H1 (cell line): ENCODE measurements at regions of chr3 and their contacts with region 1.

Region 1: DNA sequence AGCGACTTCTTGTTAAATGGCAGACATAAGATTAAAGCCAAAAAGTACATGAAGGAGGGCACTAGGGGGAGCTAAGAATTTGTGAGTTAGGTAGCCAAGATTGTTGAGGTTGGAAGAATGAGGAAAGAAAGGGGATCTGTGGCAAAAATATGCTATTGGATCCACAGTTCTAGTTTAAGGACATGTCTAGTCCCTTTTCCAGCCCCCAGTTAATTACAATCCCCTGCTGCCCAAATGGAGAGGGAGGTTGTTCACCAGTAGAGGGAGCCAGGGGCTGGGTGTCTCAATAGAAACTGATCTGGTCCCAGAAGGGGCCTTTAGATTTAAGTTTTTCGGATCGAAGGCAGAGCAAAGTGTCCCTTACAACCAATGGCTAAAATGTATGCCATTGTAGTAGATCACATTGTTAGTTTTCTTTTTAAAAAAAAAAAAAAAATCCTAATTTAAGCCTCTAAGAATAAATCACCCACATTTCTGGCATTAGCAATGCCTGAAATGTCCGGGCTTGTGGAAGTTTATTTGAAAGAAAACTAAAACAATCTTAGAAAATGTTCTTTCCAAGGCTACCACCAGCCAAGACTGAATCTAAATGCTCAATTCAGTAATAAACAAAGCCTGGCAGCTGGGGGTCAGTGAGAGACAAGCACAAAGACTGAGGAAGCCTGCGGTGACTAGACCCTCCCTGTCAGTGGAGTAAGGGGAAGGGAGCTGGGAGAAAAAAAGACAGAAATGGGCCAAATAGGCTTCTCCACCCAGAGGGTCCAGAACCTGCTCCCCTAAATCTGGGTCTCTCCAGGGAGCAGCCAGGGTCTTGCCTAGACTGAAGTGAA is 7.1 kb downstream of the COL8A1 start:
- DNase-seq: no peak
- H3K4me3 ChIP-seq: no peak overlapping the region
- H3K27ac ChIP-seq: no peak overlapping the region
- H3K4me1 ChIP-seq: peaks cover 0 to 4% (median 2%) of the 10 kb centered on the region in 4 experiments; a peak in 1 of 7 replicates
- H3K27me3 ChIP-seq: no peaks in the 10 kb centered on the region; a peak in 1 of 7 replicates
- CTCF ChIP-seq: peak; percentile 55 to 78 (median 72)
- EP300 ChIP-seq: no peak
- POLR2A ChIP-seq: no peak
- RAD21 ChIP-seq: peak; percentile 52 to 64; a peak in 3 of 4 replicates

Region 2: GRCh38 chr3:99666201-99666600 is 20.7 kb after region 1 on chr3:
- CTCF ChIA-PET with region 1: interaction called, 49 read pairs
- POLR2A ChIA-PET with region 1: no interaction called
- DNase-seq: no peak
- H3K4me3 ChIP-seq: no peak overlapping the region
- H3K27ac ChIP-seq: no peak overlapping the region
- H3K4me1 ChIP-seq: peaks cover 0 to 3% (median 1%) of the 10 kb centered on the region in 4 experiments; a peak in 1 of 7 replicates
- H3K27me3 ChIP-seq: no peaks in the 10 kb centered on the region
- CTCF ChIP-seq: no peak
- EP300 ChIP-seq: no peak
- POLR2A ChIP-seq: no peak
- RAD21 ChIP-seq: no peak

Region 3: DNA sequence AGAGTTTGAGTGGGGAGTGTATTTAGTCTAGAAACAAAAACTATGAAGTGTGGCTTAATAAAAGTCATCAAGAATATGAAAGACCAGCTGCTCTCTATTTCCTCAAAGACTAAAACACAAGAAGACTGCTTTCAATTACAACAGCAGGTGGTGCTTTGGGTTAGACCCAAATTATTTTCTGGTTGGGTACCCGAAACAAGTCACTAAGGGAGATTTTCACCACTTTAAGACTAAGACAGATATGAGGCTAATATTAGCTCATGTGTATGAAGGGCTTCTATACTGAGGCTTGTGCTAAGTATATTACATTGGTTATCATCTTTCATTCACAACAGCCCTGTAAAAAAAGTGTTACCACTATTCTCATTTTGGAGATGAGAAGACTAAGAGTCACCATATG is 36.0 kb after region 1 on chr3:
- CTCF ChIA-PET with region 1: interaction called, 38 read pairs
- POLR2A ChIA-PET with region 1: no interaction called
- DNase-seq: no peak
- H3K4me3 ChIP-seq: no peak overlapping the region
- H3K27ac ChIP-seq: no peak overlapping the region
- H3K4me1 ChIP-seq: peaks cover 0 to 3% (median 0%) of the 10 kb centered on the region in 4 experiments; a peak in 1 of 7 replicates
- H3K27me3 ChIP-seq: no peaks in the 10 kb centered on the region
- CTCF ChIP-seq: no peak
- EP300 ChIP-seq: no peak
- POLR2A ChIP-seq: no peak
- RAD21 ChIP-seq: no peak

Region 4: GRCh38 chr3:99699841-99700240 is 54.3 kb after region 1 on chr3:
- CTCF ChIA-PET with region 1: interaction called, 14 read pairs
- POLR2A ChIA-PET with region 1: no interaction called
- DNase-seq: no peak
- H3K4me3 ChIP-seq: no peak overlapping the region
- H3K27ac ChIP-seq: no peak overlapping the region
- H3K4me1 ChIP-seq: no peaks in the 10 kb centered on the region
- H3K27me3 ChIP-seq: no peaks in the 10 kb centered on the region
- CTCF ChIP-seq: no peak
- EP300 ChIP-seq: no peak
- POLR2A ChIP-seq: no peak
- RAD21 ChIP-seq: no peak